AG04449 (cell line): ENCODE measurements at regions of chr12 and their contacts with region 1.

Region 1: GRCh38 chr12:50074936-50075807 is 10.0 kb upstream of the SMARCD1 start:
- DNase-seq: no peak
- H3K4me3 ChIP-seq: no peak overlapping the region
- CTCF ChIP-seq: peak; percentile 89

Region 2: GRCh38 chr12:49866859-49867579 is 208.2 kb before region 1 on chr12:
- CTCF ChIA-PET with region 1: interaction called, 59 read pairs
- POLR2A ChIA-PET with region 1: no interaction called
- DNase-seq: no peak
- H3K4me3 ChIP-seq: no peak overlapping the region
- CTCF ChIP-seq: peak; percentile 96

Region 3: DNA sequence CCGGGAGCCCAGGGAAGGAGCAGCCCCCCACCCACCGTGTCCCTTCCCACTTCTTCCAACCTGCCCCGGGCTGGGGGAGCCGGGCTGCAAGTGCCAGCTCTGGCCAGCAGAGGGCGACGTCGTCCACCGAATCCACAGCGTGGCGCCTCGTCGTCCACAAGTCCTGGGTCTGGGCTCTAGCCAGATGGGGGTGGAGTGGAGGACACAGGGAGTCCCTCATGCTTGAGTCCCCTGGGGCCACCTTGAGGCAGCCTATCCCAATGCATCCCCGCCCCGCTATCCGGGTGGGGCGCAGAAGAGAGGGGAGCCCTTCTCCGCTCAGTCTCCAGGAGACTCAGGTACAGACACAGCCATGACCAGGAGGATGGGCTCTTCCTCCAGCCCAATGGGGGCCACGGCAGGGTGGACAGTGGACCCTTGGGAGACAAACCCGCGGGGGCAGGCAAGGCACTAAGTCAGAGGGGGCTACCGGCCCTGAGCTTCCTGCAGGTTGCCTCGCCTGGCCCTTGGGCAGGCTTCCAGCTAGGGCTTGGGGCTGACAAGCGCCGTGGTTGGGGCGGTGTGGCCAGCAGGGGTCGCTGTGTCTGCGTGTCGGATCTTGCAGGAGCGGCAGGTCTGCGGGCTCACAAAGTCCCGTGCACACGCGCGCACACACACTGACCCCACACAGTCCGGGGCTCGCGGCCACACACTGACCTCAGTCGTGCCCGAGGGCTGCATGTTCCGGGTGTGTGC is 108.0 kb before region 1 on chr12:
- CTCF ChIA-PET with region 1: interaction called, 1,042 read pairs
- POLR2A ChIA-PET with region 1: interaction called, 4 read pairs
- DNase-seq: no peak
- H3K4me3 ChIP-seq: peak overlapping the region; percentile 56
- CTCF ChIP-seq: peak; percentile 96

Region 4: DNA sequence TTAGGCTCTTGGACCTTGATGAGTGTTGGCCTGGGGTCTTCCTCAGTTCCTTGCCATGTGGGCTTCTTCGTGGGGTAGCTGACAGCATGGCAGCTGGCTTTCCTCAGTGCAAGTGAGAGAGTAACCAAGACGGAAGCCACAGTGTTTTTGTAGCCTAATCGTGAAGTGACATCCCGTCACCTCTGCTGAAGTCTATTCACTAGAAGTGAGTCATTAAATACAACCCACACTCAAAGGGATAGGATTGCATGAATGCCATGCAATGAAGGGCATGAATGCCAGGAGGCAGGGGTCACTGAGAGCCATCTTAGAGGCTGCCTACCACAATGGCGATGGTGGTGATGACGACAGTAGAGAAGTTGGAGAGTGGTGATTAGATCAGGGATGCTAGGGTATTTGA is 31.3 kb before region 1 on chr12:
- CTCF ChIA-PET with region 1: interaction called, 246 read pairs
- POLR2A ChIA-PET with region 1: no interaction called
- DNase-seq: no peak
- H3K4me3 ChIP-seq: no peak overlapping the region
- CTCF ChIP-seq: no peak

Region 5: GRCh38 chr12:50111693-50112455 is 36.7 kb after region 1 on chr12 and contains the start of gene COX14:
- CTCF ChIA-PET with region 1: interaction called, 24 read pairs
- POLR2A ChIA-PET with region 1: no interaction called
- DNase-seq: peak; percentile 97
- H3K4me3 ChIP-seq: peak within 1 kb of the TSS; percentile 98
- CTCF ChIP-seq: peak; percentile 96

Region 6: DNA sequence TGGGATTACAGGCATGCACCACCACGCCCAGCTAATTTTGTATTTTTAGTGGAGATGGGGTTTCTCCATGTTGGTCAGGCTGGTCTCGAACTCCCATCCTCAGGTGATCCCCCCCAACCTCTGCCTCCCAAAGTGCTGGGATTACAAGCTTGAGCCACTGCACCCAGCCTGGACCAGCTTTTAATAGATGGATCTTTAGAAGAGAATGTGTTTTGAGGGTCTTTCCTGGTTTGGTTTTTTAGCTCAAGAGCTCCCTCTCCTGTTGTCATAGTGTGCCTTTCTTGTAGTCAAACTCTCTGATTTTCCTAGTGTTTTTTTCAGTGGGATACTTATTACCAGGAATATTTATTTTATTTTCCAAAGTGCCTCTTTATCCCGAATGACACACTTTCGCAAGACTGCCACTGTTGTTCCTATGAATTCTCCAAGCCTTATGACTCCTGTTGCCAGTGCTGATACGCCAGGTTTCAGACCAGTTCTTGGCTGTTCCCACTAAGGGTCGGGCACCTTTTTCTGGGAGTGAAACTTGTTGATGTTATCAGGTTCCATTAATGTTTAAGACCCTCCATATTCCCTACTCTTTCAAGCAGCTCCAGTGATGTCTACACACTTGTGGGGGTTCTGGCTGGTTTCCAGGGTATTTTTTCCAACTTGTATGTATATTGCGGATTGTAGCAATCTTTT is 239.6 kb after region 1 on chr12:
- CTCF ChIA-PET with region 1: interaction called, 21 read pairs
- POLR2A ChIA-PET with region 1: no interaction called
- DNase-seq: no peak
- H3K4me3 ChIP-seq: no peak overlapping the region
- CTCF ChIP-seq: peak; percentile 49